Heart right ventricle (tissue), 16 donors: ENCODE measurements at regions of chr3 and their contacts with region 1.

Region 1: GRCh38 chr3:15256861-15257341 is 50.9 kb downstream of the CAPN7 start:
- DNase-seq: no peak
- ATAC-seq: peak in 7 of 8 donors; percentile 27 to 77 (median 72)
- H3K4me3 ChIP-seq: no peak overlapping the region
- H3K27ac ChIP-seq: peak overlapping the region in 8 of 10 donors; percentile 31 to 69 (median 48)
- H3K4me1 ChIP-seq: peaks cover 0 to 24% (median 5%) of the 10 kb centered on the region in 9 donors
- H3K27me3 ChIP-seq: no peaks in the 10 kb centered on the region
- CTCF ChIP-seq: no peak

Region 2: DNA sequence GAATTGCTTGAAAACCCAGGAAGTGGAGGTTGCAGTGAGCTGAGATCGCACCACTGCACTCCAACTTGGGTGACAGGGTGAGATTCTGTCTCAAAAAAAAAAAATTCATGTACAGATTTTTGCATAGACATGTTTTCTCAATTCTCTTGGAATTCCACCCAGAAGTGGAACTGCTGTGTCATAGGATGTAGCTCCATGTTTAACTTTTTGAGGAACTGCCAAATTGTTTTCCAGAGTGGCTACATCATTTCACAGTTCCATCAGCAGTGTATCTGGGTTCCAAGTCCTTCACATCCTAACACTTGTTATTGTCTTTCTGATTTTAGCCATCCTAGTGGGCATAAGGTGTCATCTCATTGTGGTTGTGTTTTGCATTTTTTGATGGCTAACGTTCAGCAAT is 40.9 kb before region 1 on chr3:
- intact Hi-C with region 1: loop called in 2 of 10 experiments (anchors 5 kb)
- DNase-seq: no peak
- ATAC-seq: no peak
- H3K4me3 ChIP-seq: no peak overlapping the region
- H3K27ac ChIP-seq: no peak overlapping the region
- H3K4me1 ChIP-seq: peaks cover 0 to 40% (median 25%) of the 10 kb centered on the region in 9 donors
- H3K27me3 ChIP-seq: no peaks in the 10 kb centered on the region
- CTCF ChIP-seq: no peak

Region 3: DNA sequence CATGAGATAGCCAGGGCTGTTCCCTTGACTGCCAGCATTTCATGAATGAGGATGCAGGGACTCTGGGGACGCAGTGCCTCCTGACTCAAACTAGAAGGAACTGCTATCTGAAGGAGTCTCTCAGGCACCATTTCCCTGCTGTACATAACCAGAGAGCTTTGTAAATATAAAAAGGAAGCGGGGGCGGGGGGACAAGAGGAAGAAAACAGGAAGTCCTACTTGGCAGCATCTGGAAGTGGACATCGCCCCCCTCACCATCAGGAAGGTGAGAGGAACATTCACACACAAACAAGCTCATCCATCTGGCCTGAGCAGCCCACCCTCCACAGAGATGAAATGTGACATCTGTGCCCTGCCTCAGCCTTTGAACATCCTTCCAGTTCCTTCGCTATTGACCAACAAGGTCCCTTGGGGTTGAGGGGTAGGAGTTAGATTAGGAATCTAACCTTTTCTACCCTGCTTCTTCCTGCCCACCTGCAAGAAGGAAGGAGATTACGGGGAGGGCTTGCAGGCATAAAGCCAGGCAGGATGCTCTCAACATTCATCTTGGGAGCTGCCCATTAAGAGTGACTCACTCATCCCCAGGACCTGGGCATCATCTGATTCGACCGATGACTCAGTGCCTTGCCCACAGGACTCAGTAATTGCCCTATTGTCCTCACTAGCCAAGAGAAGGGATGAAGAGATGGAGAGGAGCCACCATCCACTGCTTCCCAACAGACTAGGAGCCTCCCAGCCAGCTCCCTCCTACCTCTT is 43.6 kb after region 1 on chr3:
- intact Hi-C with region 1: no loop called
- DNase-seq: no peak
- ATAC-seq: peak in 7 of 8 donors; percentile 32 to 67 (median 43)
- H3K4me3 ChIP-seq: no peak overlapping the region
- H3K27ac ChIP-seq: peak overlapping the region in 5 of 10 donors; percentile 5 to 67 (median 23)
- H3K4me1 ChIP-seq: peaks cover 0 to 64% (median 42%) of the 10 kb centered on the region in 9 donors
- H3K27me3 ChIP-seq: no peaks in the 10 kb centered on the region
- CTCF ChIP-seq: peak in 4 of 9 donors; percentile 5 to 25 (median 18)

Region 4: DNA sequence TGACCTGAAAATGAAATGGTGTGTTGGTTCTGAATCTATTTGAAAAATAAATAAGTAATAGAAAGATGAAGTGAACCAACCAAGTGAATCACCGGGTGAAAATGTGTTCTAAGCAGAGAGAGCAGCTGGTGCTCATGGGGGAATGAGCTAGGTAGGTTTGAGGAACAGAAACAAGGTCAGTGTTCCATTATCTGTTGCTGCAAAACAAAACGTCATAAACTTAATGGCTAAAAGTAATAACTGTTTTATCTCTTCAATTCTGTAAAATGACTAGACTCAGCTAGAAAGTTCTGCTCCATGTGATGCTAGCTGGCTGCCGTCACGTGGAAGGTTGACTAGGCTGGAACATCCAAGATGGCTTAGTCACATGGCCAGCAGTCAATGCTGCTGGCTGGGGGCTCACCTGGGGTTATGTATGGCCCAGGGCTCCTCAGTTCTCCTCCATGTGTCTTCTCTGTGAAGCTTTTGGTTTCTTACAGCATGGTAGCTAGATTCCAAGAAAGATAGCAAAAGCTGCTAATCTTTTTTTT is 88.8 kb after region 1 on chr3:
- intact Hi-C with region 1: no loop called
- DNase-seq: no peak
- ATAC-seq: no peak
- H3K4me3 ChIP-seq: no peak overlapping the region
- H3K27ac ChIP-seq: no peak overlapping the region
- H3K4me1 ChIP-seq: peaks cover 0 to 33% (median 0%) of the 10 kb centered on the region in 9 donors
- H3K27me3 ChIP-seq: no peaks in the 10 kb centered on the region
- CTCF ChIP-seq: no peak

Region 5: GRCh38 chr3:15585111-15585845 is 328.4 kb after region 1 on chr3:
- intact Hi-C with region 1: loop called in 1 of 10 experiments (anchors 10 kb)
- DNase-seq: no peak
- ATAC-seq: no peak
- H3K4me3 ChIP-seq: no peak overlapping the region
- H3K27ac ChIP-seq: no peak overlapping the region
- H3K4me1 ChIP-seq: no peaks in the 10 kb centered on the region
- H3K27me3 ChIP-seq: no peaks in the 10 kb centered on the region
- CTCF ChIP-seq: no peak